ENCODE measurements at regions of chr3 and their contacts with region 1.

Region 1: DNA sequence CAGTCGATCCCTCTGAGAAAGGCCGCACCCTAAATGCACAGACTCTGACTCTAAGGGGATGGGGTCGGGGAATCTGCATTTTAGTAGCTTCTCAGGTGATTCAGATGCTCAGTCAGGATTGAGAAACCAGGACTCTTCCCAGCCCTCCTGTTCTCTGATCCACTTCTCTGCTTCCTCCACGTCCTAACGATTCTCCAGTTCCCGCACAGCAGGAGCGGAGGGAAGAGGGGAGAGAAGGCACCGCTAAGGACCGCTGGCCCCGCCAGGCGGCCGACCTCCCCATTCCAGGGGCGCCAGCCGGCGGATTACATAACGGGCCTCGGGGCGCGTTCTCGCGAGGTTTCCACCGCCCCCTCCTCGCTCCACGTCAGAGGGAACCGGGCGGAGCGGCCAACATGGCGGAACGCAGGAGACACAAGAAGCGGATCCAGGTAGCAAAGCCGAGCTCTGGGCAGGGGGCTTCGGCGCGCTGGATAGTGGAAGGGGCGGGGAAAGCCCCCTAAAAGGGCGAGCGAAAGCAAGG is at the start of gene SEC62:
- DNase-seq: peak; percentile 91 to 97 (median 94)
- H3K4me3 ChIP-seq: peak within 1 kb of the TSS; percentile 42 to 86 (median 73)
- H3K27ac ChIP-seq: peak within 1 kb of the TSS; percentile 47 to 100 (median 96)
- H3K4me1 ChIP-seq: peaks cover 22 to 39% of the 10 kb centered on the region in 2 donors
- H3K27me3 ChIP-seq: no peaks in the 10 kb centered on the region
- CTCF ChIP-seq: peak in 4 of 6 experiments; percentile 15 to 53 (median 38)
- POLR2A ChIP-seq: peak; percentile 76 to 78
- total RNA-seq, gene SEC62: 41.1 to 199 (median 125) TPM

Region 2: DNA sequence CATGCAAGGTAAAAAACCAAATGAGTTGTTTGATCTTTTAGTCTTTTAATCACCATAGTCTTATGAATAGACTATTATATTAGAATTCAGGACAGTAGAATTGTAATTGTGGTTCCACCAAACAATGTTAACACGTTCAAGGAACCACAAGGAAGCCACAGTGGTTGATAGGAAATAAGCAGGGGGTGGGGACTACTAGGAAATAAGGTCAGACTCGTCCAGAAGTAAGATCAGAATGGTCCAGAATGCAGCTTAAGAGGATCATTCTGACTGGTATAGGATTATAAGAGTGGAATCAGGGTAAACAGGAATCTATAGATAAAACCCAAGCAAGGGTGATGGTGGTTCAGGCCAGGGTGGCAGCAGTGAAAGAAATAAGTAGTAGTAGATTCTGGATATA is 185.7 kb before region 1 on chr3:
- intact Hi-C with region 1: loop called in 1 of 2 experiments (anchors 10 kb)
- DNase-seq: no peak
- H3K4me3 ChIP-seq: no peak overlapping the region
- H3K27ac ChIP-seq: no peak overlapping the region
- H3K4me1 ChIP-seq: peaks cover 0 to 10% of the 10 kb centered on the region in 2 donors
- H3K27me3 ChIP-seq: no peaks in the 10 kb centered on the region
- CTCF ChIP-seq: no peak
- POLR2A ChIP-seq: no peak

Region 3: GRCh38 chr3:169863458-169863899 is 103.0 kb before region 1 on chr3:
- intact Hi-C with region 1: loop called in 1 of 2 experiments (anchors 10 kb)
- DNase-seq: peak; percentile 44 to 90 (median 69)
- H3K4me3 ChIP-seq: no peak overlapping the region
- H3K27ac ChIP-seq: no peak overlapping the region
- H3K4me1 ChIP-seq: no peaks in the 10 kb centered on the region
- H3K27me3 ChIP-seq: no peaks in the 10 kb centered on the region
- CTCF ChIP-seq: peak; percentile 86 to 92 (median 90)
- POLR2A ChIP-seq: no peak

Region 4: GRCh38 chr3:170033489-170033888 is 67.0 kb after region 1 on chr3:
- intact Hi-C with region 1: no loop called
- DNase-seq: no peak
- H3K4me3 ChIP-seq: no peak overlapping the region
- H3K27ac ChIP-seq: no peak overlapping the region
- H3K4me1 ChIP-seq: peaks cover 0 to 10% of the 10 kb centered on the region in 2 donors
- H3K27me3 ChIP-seq: no peaks in the 10 kb centered on the region
- CTCF ChIP-seq: no peak
- POLR2A ChIP-seq: no peak

Measured in adrenal gland (tissue), 19 donors.